ENCODE measurements at regions of chr2 and their contacts with region 1.

Region 1: DNA sequence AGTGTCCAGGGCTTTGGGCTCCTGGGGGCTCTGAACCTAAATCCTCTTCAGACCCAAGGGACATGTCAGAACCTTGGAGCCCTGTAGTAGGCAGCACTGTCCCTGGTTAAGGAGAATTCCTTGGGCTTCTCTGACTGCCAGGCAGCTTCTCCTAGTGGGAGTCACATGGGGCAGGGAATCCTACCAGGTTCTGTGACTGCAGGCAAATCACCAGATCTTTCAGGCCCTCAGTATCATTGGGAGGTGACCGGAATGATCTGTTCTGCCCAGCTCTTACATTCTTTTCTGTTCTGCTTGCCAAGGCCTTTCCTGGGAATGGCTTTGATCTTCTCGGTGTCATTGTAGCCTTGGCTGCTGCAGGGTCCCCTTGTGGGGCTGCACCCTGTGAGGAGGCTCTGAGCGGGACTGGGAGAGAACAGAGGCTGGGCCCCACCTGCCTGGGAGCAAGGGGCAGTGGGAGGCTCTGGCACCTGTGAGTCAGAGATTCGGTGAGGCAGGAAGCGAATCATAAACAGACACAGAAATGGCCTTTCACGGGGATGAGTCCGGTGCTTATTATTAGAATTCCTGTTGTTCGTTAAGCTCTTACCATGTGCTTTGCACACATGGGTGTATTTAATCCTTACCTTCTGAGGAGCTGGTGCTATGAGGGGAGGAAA is 14.1 kb downstream of the CEP68 start:
- DNase-seq: peak in 1 of 3 donors; percentile 54
- ATAC-seq: peak; percentile 38 to 66
- H3K4me3 ChIP-seq: no peak overlapping the region
- H3K27ac ChIP-seq: peak overlapping the region; percentile 47
- H3K4me1 ChIP-seq: peaks cover 26% of the 10 kb centered on the region
- H3K27me3 ChIP-seq: no peaks in the 10 kb centered on the region

Region 2: DNA sequence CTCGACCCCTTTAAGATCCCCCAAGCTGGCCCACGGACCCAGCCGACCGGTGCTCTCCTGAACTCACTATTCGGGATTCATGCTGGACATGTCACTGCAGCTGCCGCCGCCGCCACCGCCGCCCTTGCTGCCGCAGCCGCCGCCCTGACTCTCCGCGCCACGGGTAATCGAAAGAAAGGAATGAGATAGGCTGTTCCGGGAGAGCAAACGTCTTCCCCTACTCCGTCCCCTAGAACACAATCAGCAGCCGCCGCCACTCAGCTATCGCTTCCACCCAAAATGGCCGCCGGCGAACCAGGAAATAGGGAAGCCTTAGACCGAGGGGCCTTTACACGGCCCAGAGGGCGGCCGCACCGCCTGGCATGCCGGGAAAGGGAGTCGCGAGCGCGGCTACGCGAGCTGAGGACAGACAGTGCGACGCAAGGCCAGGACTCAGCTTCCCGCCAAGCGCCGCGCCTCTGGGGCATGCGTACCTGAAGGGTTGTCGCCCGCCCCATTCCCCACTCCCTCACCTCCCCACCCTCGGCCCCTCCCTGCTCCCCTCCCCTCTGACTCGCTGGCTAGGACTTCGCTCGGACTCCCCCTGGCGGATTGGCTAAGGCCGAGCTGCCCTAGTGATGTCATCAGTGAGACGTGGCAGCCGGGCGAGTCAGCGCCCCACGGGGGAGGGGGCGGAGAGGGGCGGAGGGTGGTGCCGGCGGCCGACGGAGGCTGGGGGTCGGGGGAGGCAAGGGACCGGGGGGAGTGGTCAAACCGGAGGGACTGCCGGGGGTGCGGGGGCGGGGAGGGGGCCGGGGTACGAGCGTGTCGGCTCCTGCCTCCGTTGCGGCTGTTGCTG is 59.7 kb after region 1 on chr2 and contains the start of gene RAB1A:
- intact Hi-C with region 1: loop called in 1 of 4 experiments (anchors 10 kb)
- DNase-seq: peak; percentile 100
- ATAC-seq: peak; percentile 97 to 98
- H3K4me3 ChIP-seq: peak within 1 kb of the TSS; percentile 95
- H3K27ac ChIP-seq: peak within 1 kb of the TSS; percentile 98
- H3K4me1 ChIP-seq: peaks cover 2% of the 10 kb centered on the region
- H3K27me3 ChIP-seq: no peaks in the 10 kb centered on the region
- total RNA-seq, gene RAB1A: 118 to 157 (median 136) TPM

Region 3: DNA sequence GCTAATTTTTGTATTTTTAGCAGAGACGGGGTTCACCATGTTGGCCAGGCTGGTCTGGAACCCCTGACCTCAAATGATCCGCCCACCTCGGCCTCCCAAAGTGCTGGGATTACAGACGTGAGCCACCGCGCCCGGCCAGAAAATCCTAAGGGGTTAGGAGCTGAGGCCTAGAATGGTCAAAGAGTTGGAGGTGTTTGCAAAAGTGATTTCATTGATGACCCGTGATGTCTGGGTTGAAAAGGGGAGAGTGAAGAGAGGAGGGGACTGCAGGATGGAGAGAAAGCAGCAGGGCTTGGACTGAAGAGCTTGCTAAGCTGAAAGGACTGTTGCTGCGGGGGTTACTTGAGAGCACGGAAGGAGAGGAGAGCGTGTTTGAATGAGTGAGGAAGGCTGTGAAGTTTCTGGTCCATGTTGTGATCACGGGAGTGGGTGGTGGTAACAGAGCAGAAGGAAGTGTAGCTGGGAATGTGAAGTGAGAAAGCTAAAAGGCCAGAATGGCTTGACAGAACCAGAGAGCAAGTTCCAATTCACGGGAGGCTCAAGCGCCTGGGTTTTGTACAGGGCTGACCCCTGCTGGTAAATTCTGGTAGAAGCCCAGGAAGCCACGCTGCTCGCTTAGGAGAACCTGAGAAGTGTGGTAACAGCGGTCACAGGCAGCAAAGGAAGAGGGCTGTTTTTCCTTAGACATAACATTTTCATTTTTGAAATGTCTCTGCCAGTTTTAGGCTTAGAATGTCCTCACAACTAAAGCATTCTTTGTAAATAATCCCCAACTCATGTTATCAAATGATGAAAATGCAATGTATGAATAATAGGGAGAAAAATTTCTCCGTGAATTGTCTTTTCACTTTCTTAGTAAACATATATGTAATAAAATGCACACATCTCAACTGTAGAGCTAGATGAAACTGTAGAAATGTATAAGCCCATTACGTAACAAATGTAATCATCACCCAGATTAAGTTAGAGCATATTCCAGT is 116.9 kb after region 1 on chr2:
- intact Hi-C with region 1: loop called in 1 of 4 experiments (anchors 5 kb)
- DNase-seq: peak; percentile 68 to 87 (median 83)
- ATAC-seq: peak; percentile 93 to 95
- H3K4me3 ChIP-seq: no peak overlapping the region
- H3K27ac ChIP-seq: no peak overlapping the region
- H3K4me1 ChIP-seq: no peaks in the 10 kb centered on the region
- H3K27me3 ChIP-seq: no peaks in the 10 kb centered on the region